ENCODE measurements at regions of chr4 and their contacts with region 1.

Region 1: DNA sequence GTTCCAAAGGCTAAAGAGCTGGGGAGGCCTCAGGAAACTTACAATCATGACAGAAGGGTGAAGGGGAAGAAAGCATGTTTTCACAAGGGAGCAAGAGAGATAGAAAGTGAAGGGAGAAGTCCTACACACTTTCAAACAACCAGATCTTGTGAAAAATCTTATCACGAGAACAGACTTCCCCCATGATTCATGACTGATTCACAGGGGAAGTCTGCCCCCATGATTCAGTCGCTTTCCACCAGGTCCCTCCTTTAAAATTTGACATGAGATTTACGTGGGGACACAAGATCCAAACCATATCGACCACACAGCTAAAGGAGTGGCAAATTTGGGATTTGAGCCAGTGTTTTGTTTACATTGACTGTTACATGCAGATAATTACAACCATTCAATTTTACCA is 971.1 kb upstream of the HS3ST1 start:
- DNase-seq: no peak
- ATAC-seq: no peak
- H3K4me3 ChIP-seq: no peak overlapping the region
- H3K27ac ChIP-seq: no peak overlapping the region
- H3K4me1 ChIP-seq: no peaks in the 10 kb centered on the region
- H3K27me3 ChIP-seq: no peaks in the 10 kb centered on the region
- CTCF ChIP-seq: no peak
- POLR2A ChIP-seq: no peak

Region 2: DNA sequence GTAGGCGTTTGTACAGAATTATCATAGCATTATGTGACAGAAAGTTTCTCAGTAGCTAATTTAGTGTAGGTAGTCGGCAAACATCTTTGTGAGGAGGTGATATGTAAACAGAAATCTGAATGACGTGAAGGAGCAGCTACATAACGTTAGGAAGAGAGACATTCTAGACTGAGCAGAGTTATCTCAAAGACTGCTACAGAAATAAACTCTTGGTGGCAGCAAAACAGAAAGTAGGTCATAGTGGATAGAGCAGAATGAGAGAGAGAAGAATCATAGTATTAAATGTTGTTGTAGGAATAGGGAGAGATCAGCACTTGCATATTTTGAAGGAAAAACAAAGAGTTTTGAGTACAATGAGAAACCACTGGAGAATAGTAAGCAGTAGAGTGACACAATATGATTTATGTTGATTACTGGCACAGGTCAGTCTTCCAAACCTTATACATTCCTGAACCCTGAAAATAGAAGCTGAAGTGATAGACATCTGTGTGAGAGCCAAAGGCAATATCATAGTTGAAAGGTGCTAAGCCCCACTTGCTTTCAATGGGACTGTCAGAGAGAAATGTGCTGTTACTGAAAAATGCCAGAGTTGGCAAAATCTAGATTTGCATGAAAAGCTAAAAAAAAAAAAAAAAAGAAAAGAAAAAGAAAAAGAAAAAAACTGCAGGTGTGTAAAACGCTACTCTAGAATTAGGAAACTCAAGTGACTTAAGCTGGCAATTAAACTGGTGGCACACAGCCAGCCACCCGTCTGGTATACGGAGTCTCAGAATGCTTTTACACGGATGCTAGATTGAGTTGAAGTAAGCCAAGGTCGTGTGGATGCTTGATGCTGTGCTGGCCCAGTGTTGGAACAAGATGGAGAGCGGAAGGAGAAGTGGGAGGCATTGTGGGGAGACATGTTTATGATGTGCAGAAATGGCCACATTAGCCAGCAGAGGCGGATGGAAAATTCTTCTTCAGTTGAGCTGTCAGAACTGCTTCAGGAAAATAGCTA is 220.9 kb before region 1 on chr4:
- intact Hi-C with region 1: loop called in 1 of 10 experiments (anchors 10 kb)
- DNase-seq: peak in 3 of 5 donors; percentile 30 to 51 (median 35)
- ATAC-seq: peak in 3 of 4 donors; percentile 62 to 74 (median 65)
- H3K4me3 ChIP-seq: no peak overlapping the region
- H3K27ac ChIP-seq: peak overlapping the region in 2 of 12 donors; percentile 7 to 22
- H3K4me1 ChIP-seq: peaks cover 0 to 4% (median 0%) of the 10 kb centered on the region in 12 donors
- H3K27me3 ChIP-seq: no peaks in the 10 kb centered on the region
- CTCF ChIP-seq: peak in 1 of 12 donors; percentile 12
- POLR2A ChIP-seq: no peak

Region 3: DNA sequence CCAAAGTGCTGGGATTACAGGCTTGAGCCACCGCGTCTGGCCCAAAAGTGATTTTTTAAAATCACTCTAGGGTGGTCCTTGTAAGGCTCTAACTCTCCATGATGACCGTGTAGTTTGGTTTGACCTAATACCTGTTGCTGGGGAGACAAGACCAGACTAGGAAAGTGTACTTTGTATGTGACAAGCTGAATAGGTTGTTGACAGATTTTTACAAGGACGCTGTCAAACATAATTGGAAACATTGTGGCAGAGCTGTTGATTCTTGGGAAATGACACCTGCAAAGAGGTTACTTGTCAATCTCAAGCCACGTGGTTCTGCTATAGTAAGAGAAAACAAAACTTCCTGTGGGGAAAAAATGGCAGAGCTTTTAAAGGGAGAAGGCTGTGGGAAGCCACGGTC is 168.7 kb before region 1 on chr4:
- intact Hi-C with region 1: loop called in 1 of 10 experiments (anchors 10 kb)
- DNase-seq: no peak
- ATAC-seq: peak; percentile 54 to 92 (median 78)
- H3K4me3 ChIP-seq: no peak overlapping the region
- H3K27ac ChIP-seq: peak overlapping the region in 2 of 12 donors; percentile 40 to 66
- H3K4me1 ChIP-seq: peaks cover 0 to 6% (median 0%) of the 10 kb centered on the region in 12 donors
- H3K27me3 ChIP-seq: no peaks in the 10 kb centered on the region
- CTCF ChIP-seq: no peak
- POLR2A ChIP-seq: no peak